ENCODE measurements at regions of chr17 and their contacts with region 1.

Region 1: GRCh38 chr17:11823862-11824261 is 173.4 kb downstream of the ZNF18 start:
- DNase-seq: no peak
- H3K4me3 ChIP-seq: no peak overlapping the region
- H3K27ac ChIP-seq: no peak overlapping the region
- H3K4me1 ChIP-seq: no peaks in the 10 kb centered on the region
- H3K27me3 ChIP-seq: no peaks in the 10 kb centered on the region
- CTCF ChIP-seq: no peak
- POLR2A ChIP-seq: no peak

Region 2: GRCh38 chr17:11768106-11768505 is 55.8 kb before region 1 on chr17:
- intact Hi-C with region 1: loop called (anchors 10 kb)
- DNase-seq: no peak
- H3K4me3 ChIP-seq: no peak overlapping the region
- H3K27ac ChIP-seq: no peak overlapping the region
- H3K4me1 ChIP-seq: no peaks in the 10 kb centered on the region
- H3K27me3 ChIP-seq: no peaks in the 10 kb centered on the region
- CTCF ChIP-seq: no peak
- POLR2A ChIP-seq: no peak

Region 3: GRCh38 chr17:12765548-12765947 is 941.7 kb after region 1 on chr17:
- intact Hi-C with region 1: no loop called
- DNase-seq: no peak
- H3K4me3 ChIP-seq: no peak overlapping the region
- H3K27ac ChIP-seq: no peak overlapping the region
- H3K4me1 ChIP-seq: no peaks in the 10 kb centered on the region
- H3K27me3 ChIP-seq: no peaks in the 10 kb centered on the region
- CTCF ChIP-seq: no peak
- POLR2A ChIP-seq: no peak